AG04450 (cell line): ENCODE measurements at regions of chr11 and their contacts with region 1.

Region 1: GRCh38 chr11:94623120-94623735 is 56.1 kb downstream of the PIWIL4 start:
- DNase-seq: peak; percentile 46
- H3K4me3 ChIP-seq: no peak overlapping the region
- H3K27ac ChIP-seq: no peak overlapping the region
- H3K27me3 ChIP-seq: peaks cover 2% of the 10 kb centered on the region
- CTCF ChIP-seq: peak; percentile 90

Region 2: GRCh38 chr11:94613120-94613519 is 10.1 kb before region 1 on chr11:
- CTCF ChIA-PET with region 1: interaction called, 19 read pairs
- POLR2A ChIA-PET with region 1: no interaction called
- DNase-seq: no peak
- H3K4me3 ChIP-seq: no peak overlapping the region
- H3K27ac ChIP-seq: no peak overlapping the region
- H3K27me3 ChIP-seq: no peaks in the 10 kb centered on the region
- CTCF ChIP-seq: no peak

Region 3: DNA sequence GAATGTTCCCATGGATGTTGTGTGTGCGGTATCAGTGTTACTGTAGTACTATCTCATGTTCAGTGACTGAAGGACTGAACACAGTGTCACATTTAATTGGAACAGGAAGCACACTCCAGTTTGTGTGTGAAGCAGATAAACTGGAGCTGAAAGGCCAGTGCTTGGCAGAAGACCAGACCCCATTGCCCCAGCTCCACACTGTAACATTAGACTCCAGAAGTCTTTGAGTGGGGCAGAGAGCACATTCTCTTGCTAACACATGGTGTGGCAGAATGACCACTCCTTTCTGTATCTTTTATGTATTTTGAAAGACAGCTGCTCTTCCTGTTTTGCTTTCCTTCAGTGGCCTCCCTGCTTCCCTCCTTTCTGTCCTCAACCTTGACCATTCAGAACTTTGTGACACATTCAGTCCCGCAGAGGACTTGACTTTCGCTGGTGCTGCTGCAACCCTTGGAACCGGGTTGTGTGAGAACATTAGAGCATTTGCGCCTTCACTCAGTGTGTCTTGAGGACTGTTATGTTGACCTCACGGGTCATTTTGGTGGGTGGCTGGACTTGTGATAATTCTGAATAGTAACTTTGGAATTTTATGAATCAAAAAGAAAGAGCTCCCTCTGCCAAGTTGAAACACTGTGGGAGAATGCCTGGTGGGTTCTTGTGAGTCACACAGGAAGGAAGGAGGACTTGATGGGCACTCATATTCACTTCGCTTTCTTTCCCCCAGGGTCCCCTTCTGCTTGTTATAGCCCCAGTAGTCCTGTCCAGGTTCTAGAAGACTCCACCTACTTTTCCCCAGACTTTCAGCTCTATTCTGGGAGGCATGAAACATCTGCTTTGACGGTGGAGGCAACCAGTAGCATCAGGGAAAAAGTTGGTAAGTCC is 171.3 kb after region 1 on chr11:
- CTCF ChIA-PET with region 1: interaction called, 11 read pairs
- POLR2A ChIA-PET with region 1: no interaction called
- DNase-seq: peak; percentile 89
- H3K4me3 ChIP-seq: peak overlapping the region; percentile 52
- H3K27ac ChIP-seq: peak overlapping the region; percentile 93
- H3K27me3 ChIP-seq: no peaks in the 10 kb centered on the region
- CTCF ChIP-seq: no peak

Region 4: DNA sequence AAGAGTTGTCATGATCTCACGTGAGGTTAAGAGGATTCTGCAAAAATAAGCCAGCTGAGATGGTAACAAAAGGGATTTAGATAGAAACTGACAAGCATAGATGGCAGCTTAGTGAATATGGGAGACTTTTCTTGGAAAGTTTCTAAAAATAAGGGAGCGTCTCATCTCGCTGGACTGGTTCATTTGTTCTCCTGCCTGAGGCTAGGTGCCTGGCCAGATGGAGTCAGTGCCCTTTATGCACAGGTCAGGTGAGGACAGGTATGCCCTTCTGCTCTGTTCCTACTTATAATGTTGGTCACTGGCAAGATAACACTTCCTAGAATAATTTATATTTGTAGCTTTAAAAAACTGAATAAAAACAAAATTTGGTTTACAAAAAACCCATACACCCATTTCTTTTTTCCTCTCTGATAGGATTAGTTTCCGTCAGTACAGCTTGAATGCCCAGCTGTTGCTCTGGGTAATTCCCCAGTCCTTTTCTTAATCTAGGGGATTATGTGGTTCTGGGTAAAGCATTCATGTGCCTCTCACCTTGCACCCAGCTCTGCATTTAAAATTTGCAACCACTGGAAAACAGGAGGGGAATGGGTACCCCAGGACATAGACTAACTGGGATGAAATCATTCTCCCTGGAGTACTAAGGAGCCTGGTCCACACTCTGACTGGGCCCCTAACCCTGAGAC is 234.9 kb after region 1 on chr11:
- CTCF ChIA-PET with region 1: interaction called, 10 read pairs
- POLR2A ChIA-PET with region 1: no interaction called
- DNase-seq: no peak
- H3K4me3 ChIP-seq: no peak overlapping the region
- H3K27ac ChIP-seq: no peak overlapping the region
- H3K27me3 ChIP-seq: no peaks in the 10 kb centered on the region
- CTCF ChIP-seq: no peak

Region 5: DNA sequence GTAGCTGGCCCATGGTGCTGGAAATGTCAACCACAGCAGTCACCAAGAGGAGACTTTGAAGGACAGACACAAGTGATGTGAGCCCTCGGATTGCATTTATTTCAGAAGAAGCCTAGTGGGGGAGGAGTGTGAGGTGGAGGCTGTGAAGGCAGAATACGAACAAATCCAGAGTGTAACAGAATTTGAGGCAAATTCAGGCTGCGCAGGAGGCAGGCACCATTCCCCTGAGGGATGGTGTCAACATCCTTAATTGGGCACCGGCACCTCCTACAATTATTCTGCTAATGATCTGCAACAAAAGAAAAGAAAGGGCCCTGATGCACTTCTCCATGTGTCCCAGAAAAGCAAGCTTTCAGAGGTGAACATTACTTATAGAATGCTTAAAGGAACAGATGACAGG is 317.9 kb after region 1 on chr11:
- CTCF ChIA-PET with region 1: interaction called, 11 read pairs
- POLR2A ChIA-PET with region 1: no interaction called
- DNase-seq: no peak
- H3K4me3 ChIP-seq: no peak overlapping the region
- H3K27ac ChIP-seq: no peak overlapping the region
- H3K27me3 ChIP-seq: no peaks in the 10 kb centered on the region
- CTCF ChIP-seq: no peak